GM12878 (cell line): ENCODE measurements at regions of chr2 and their contacts with region 1.

Region 1: GRCh38 chr2:44668336-44668735 is 273.2 kb upstream of the SIX3 start:
- DNase-seq: no peak
- ATAC-seq: peak; percentile 73
- H3K4me3 ChIP-seq: no peak overlapping the region
- H3K27ac ChIP-seq: no peak overlapping the region
- H3K4me1 ChIP-seq: no peaks in the 10 kb centered on the region
- H3K27me3 ChIP-seq: no peaks in the 10 kb centered on the region
- CTCF ChIP-seq: peak; percentile 38 to 55 (median 47); a peak in 5 of 6 replicates
- EP300 ChIP-seq: no peak
- POLR2A ChIP-seq: no peak
- RAD21 ChIP-seq: peak; percentile 64

Region 2: DNA sequence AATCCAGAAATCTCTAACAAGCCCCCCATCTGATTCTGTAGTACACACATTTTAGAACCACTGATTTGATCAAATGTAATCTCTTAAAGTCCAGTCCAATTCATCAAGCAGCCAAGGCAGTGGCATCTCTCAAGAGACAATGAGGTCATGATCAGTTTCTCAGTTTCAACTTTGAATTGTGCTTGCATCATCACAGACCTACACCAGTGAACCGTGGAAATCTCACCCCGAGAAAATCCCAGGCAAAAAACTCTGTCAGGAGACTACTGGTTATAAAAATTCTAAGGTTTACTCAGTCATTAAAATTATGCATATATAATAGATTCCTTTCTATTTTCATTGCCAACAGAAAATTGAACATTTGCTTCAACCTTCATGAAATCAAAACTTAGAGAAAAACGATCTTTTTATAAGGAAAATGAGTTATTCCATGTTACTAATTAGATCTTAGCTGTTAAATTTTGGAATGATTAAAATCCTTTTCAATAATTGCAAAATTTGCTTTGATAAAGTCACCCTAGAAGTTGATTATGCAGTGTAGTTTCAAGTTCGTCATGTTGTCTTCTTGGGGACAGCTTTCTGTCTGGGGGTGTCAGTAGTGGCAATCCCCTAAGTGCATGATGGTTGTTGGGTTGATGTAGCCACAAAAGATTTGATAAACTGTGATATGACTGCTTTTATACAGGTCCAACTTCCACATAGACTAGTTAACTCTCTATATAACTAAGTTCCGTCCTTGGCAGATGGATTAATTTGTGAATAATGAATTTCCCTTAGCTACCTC is 71.6 kb before region 1 on chr2:
- CTCF ChIA-PET with region 1: interaction called, 6 read pairs
- POLR2A ChIA-PET with region 1: interaction called, 4 read pairs
- RAD21 ChIA-PET with region 1: no interaction called
- SMC1A ChIA-PET with region 1: interaction called, 12 read pairs
- in situ Hi-C with region 1: no loop called
- intact Hi-C with region 1: no loop called
- DNase-seq: peak; percentile 53
- ATAC-seq: peak; percentile 93
- H3K4me3 ChIP-seq: no peak overlapping the region
- H3K27ac ChIP-seq: no peak overlapping the region
- H3K4me1 ChIP-seq: peaks cover 3% of the 10 kb centered on the region; the same call in 1 of the 2 replicates
- H3K27me3 ChIP-seq: no peaks in the 10 kb centered on the region
- CTCF ChIP-seq: no peak
- EP300 ChIP-seq: peak; percentile 68 to 79; a peak in 2 of 4 replicates
- POLR2A ChIP-seq: no peak
- RAD21 ChIP-seq: no peak

Region 3: GRCh38 chr2:44638649-44639048 is 29.7 kb before region 1 on chr2:
- CTCF ChIA-PET with region 1: interaction called, 11 read pairs
- POLR2A ChIA-PET with region 1: no interaction called
- RAD21 ChIA-PET with region 1: interaction called, 4 read pairs
- SMC1A ChIA-PET with region 1: interaction called, 3 read pairs
- in situ Hi-C with region 1: no loop called
- intact Hi-C with region 1: no loop called
- DNase-seq: no peak
- ATAC-seq: no peak
- H3K4me3 ChIP-seq: no peak overlapping the region
- H3K27ac ChIP-seq: no peak overlapping the region
- H3K4me1 ChIP-seq: no peaks in the 10 kb centered on the region
- H3K27me3 ChIP-seq: no peaks in the 10 kb centered on the region
- CTCF ChIP-seq: no peak
- EP300 ChIP-seq: no peak
- POLR2A ChIP-seq: no peak
- RAD21 ChIP-seq: no peak

Region 4: GRCh38 chr2:44645937-44646336 is 22.4 kb before region 1 on chr2:
- CTCF ChIA-PET with region 1: interaction called, 17 read pairs
- POLR2A ChIA-PET with region 1: no interaction called
- RAD21 ChIA-PET with region 1: interaction called, 4 read pairs
- SMC1A ChIA-PET with region 1: interaction called, 7 read pairs
- in situ Hi-C with region 1: no loop called
- intact Hi-C with region 1: no loop called
- DNase-seq: no peak
- ATAC-seq: no peak
- H3K4me3 ChIP-seq: no peak overlapping the region
- H3K27ac ChIP-seq: no peak overlapping the region
- H3K4me1 ChIP-seq: no peaks in the 10 kb centered on the region
- H3K27me3 ChIP-seq: no peaks in the 10 kb centered on the region
- CTCF ChIP-seq: no peak
- EP300 ChIP-seq: no peak
- POLR2A ChIP-seq: no peak
- RAD21 ChIP-seq: no peak

Region 5: GRCh38 chr2:44652701-44653100 is 15.6 kb before region 1 on chr2:
- CTCF ChIA-PET with region 1: interaction called, 17 read pairs
- POLR2A ChIA-PET with region 1: no interaction called
- RAD21 ChIA-PET with region 1: interaction called, 9 read pairs
- SMC1A ChIA-PET with region 1: interaction called, 20 read pairs
- in situ Hi-C with region 1: no loop called
- intact Hi-C with region 1: no loop called
- DNase-seq: no peak
- ATAC-seq: no peak
- H3K4me3 ChIP-seq: no peak overlapping the region
- H3K27ac ChIP-seq: no peak overlapping the region
- H3K4me1 ChIP-seq: peaks cover 9% of the 10 kb centered on the region
- H3K27me3 ChIP-seq: no peaks in the 10 kb centered on the region
- CTCF ChIP-seq: no peak
- EP300 ChIP-seq: no peak
- POLR2A ChIP-seq: no peak
- RAD21 ChIP-seq: no peak

Region 6: DNA sequence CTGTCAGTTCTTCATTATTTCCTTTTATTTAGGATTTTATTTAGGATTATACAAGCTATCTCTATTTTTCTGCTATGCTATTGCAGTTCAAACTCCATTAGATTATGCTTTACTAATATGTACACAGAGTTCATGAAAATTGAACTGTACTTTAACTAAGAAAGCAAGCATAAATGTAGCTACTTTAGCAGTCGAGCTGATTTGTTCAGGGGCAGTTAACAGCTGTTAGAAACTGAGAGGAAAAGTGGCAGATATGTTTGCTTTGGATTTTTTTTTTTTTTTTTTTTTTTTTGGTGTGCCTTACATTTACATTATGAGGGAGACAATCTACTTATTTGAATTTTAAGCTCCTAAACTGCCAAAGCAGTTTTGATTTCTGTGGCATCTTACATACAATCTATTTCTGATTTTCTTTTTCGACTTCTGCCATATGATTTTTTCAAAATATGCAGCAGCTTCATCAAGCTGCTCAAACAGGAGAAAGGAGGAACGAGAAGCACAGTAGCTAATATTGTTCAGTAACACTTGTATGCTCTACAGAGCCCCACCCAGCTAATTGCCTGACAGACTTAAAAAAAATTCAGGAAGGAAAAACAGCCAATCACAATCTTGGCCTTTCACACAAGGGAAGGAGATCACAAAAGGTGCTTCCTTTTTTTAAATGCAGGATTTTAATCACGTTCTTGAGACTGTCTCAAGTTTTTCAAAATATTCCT is 39.8 kb after region 1 on chr2:
- CTCF ChIA-PET with region 1: interaction called, 15 read pairs
- POLR2A ChIA-PET with region 1: no interaction called
- RAD21 ChIA-PET with region 1: interaction called, 3 read pairs
- SMC1A ChIA-PET with region 1: interaction called, 19 read pairs
- in situ Hi-C with region 1: no loop called
- intact Hi-C with region 1: no loop called
- DNase-seq: peak; percentile 25
- ATAC-seq: peak; percentile 86
- H3K4me3 ChIP-seq: no peak overlapping the region; the same call in 1 of the 2 replicates
- H3K27ac ChIP-seq: peak overlapping the region; percentile 23; the same call in 1 of the 2 replicates
- H3K4me1 ChIP-seq: peaks cover 8% of the 10 kb centered on the region
- H3K27me3 ChIP-seq: no peaks in the 10 kb centered on the region
- CTCF ChIP-seq: no peak
- EP300 ChIP-seq: no peak
- POLR2A ChIP-seq: no peak
- RAD21 ChIP-seq: no peak